Activated B cell treated with CpG ODN at 0.5 μM for 24 hours (primary cell): ENCODE measurements at regions of chr1 and their contacts with region 1.

Region 1: DNA sequence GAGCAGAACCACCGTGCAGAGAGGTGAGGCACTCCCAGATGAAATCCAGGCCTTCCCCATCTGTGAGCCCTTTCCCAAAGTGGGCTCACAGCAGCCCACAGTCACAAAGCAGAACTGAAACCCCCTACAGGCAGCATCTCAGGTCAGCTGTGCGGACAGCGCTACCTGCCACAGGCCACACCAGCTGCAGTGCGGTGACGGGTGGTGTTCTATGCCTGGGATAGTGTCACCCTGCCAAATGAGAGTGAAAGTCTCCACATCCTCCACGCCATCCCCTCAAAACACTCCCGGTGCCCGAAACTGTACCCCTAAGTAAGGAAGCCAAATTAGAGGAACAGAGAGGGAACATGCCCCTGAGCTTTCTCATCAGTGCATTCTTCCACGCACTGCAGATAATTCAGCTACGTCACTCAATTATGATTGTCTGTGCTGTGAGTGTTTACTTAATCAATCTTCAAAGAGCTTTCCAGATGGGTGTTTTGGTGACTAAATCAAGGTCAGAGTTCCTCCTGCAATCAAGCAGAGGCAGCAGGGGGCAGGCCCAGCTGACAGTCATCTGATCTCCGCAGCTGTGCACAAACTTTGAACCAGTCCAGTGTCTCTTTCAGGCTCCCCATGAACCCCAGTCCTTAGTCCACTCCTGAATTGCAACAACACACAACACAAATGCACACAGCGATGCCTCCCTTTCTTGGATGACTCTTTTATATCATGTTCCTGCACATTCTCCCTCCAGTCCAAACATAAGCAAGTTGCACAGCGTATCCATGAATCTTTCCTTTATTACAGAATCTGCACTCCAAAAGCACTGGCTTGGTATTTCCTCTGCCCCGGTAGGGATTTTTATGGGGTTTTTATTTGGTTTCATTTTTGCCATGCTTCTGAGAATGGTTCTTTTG is 150.0 kb downstream of the TOMM20 start:
- DNase-seq: peak; percentile 68
- ATAC-seq: peak; percentile 58
- H3K4me3 Mint-ChIP-seq: peak overlapping the region; percentile 77
- H3K27ac Mint-ChIP-seq: peak overlapping the region; percentile 93
- H3K4me1 Mint-ChIP-seq: peaks cover 74% of the 10 kb centered on the region
- H3K27me3 Mint-ChIP-seq: no peaks in the 10 kb centered on the region
- CTCF ChIP-seq: no peak

Region 2: GRCh38 chr1:234499119-234499942 is 479.3 kb before region 1 on chr1:
- CTCF ChIA-PET with region 1: interaction called, 3 read pairs
- POLR2A ChIA-PET with region 1: interaction called, 7 read pairs
- intact Hi-C with region 1: loop called (anchors 5 kb)
- DNase-seq: peak; percentile 78
- ATAC-seq: peak; percentile 91
- H3K4me3 Mint-ChIP-seq: peak overlapping the region; percentile 55
- H3K27ac Mint-ChIP-seq: peak overlapping the region; percentile 66
- H3K4me1 Mint-ChIP-seq: peaks cover 28% of the 10 kb centered on the region
- H3K27me3 Mint-ChIP-seq: no peaks in the 10 kb centered on the region
- CTCF ChIP-seq: peak; percentile 38

Region 3: GRCh38 chr1:234730770-234731568 is 247.7 kb before region 1 on chr1:
- CTCF ChIA-PET with region 1: no interaction called
- POLR2A ChIA-PET with region 1: interaction called, 11 read pairs
- intact Hi-C with region 1: loop called (anchors 2 kb)
- DNase-seq: peak; percentile 37
- ATAC-seq: peak; percentile 81
- H3K4me3 Mint-ChIP-seq: peak overlapping the region; percentile 44
- H3K27ac Mint-ChIP-seq: peak overlapping the region; percentile 79
- H3K4me1 Mint-ChIP-seq: peaks cover 46% of the 10 kb centered on the region
- H3K27me3 Mint-ChIP-seq: no peaks in the 10 kb centered on the region
- CTCF ChIP-seq: no peak

Region 4: DNA sequence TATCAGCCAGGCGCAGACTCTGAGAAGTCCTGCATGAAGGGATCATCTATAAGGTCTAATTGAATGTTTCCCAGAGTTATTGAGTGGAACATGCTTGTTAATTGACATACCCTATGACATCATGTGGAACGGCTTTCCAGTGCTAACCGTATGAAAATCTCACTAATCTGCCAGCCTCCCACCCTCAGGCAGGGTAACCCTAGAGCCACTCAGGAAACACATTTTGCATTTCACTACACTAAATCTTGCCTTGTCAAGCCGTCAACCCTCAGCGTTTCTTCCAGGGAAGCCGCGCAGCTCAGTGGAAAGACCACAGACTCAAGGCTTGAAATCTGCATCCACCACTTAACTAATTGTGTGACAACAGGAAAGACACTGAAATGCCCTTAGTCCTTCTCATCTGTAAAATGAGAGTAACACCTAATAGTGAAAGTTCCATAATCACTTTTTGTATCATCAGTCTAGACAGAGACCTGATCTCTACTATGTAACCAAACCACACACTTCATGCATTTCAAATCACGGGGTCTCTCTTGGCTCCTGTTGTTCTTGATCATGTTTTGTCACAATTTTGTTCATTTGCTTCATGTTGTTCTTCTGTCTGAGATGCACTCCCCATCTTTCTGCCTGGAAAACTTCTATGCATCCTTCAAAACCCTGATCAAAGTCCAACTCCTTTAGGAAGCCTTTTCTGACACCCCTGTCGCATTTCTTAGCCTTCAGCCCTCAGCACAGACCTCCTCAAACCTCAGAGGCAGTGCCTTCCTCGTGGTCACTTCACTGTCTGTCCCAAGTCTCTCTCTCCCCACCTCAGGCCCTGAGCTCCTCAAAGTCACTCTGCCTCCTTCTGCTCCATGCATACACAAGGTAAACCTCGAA is 96.5 kb before region 1 on chr1:
- CTCF ChIA-PET with region 1: interaction called, 5 read pairs
- POLR2A ChIA-PET with region 1: interaction called, 8 read pairs
- intact Hi-C with region 1: loop called (anchors 1 kb)
- DNase-seq: no peak
- ATAC-seq: peak; percentile 70
- H3K4me3 Mint-ChIP-seq: peak overlapping the region; percentile 75
- H3K27ac Mint-ChIP-seq: peak overlapping the region; percentile 82
- H3K4me1 Mint-ChIP-seq: peaks cover 46% of the 10 kb centered on the region
- H3K27me3 Mint-ChIP-seq: no peaks in the 10 kb centered on the region
- CTCF ChIP-seq: no peak

Region 5: GRCh38 chr1:234955107-234955731 is 23.4 kb before region 1 on chr1:
- CTCF ChIA-PET with region 1: interaction called, 3 read pairs
- POLR2A ChIA-PET with region 1: interaction called, 49 read pairs
- intact Hi-C with region 1: no loop called
- DNase-seq: no peak
- ATAC-seq: peak; percentile 63
- H3K4me3 Mint-ChIP-seq: peak overlapping the region; percentile 76
- H3K27ac Mint-ChIP-seq: peak overlapping the region; percentile 88
- H3K4me1 Mint-ChIP-seq: peaks cover 58% of the 10 kb centered on the region
- H3K27me3 Mint-ChIP-seq: no peaks in the 10 kb centered on the region
- CTCF ChIP-seq: no peak

Region 6: GRCh38 chr1:235018161-235018560 is 39.5 kb after region 1 on chr1:
- CTCF ChIA-PET with region 1: interaction called, 7 read pairs
- POLR2A ChIA-PET with region 1: interaction called, 214 read pairs
- intact Hi-C with region 1: no loop called
- DNase-seq: no peak
- ATAC-seq: no peak
- H3K4me3 Mint-ChIP-seq: no peak overlapping the region
- H3K27ac Mint-ChIP-seq: peak overlapping the region; percentile 68
- H3K4me1 Mint-ChIP-seq: peaks cover 72% of the 10 kb centered on the region
- H3K27me3 Mint-ChIP-seq: no peaks in the 10 kb centered on the region
- CTCF ChIP-seq: no peak

Region 7: GRCh38 chr1:235075188-235075926 is 96.7 kb after region 1 on chr1:
- CTCF ChIA-PET with region 1: no interaction called
- POLR2A ChIA-PET with region 1: interaction called, 18 read pairs
- intact Hi-C with region 1: loop called (anchors 1 kb)
- DNase-seq: peak; percentile 54
- ATAC-seq: peak; percentile 76
- H3K4me3 Mint-ChIP-seq: peak overlapping the region; percentile 75
- H3K27ac Mint-ChIP-seq: peak overlapping the region; percentile 95
- H3K4me1 Mint-ChIP-seq: peaks cover 37% of the 10 kb centered on the region
- H3K27me3 Mint-ChIP-seq: no peaks in the 10 kb centered on the region
- CTCF ChIP-seq: no peak